ENCODE measurements at regions of chr10 and their contacts with region 1.

Region 1: GRCh38 chr10:6269953-6270867 is 67.5 kb downstream of the PFKFB3 start:
- DNase-seq: no peak
- ATAC-seq: no peak
- H3K4me3 ChIP-seq: no peak overlapping the region
- H3K27ac ChIP-seq: no peak overlapping the region
- H3K4me1 ChIP-seq: peaks cover 0 to 2% of the 10 kb centered on the region in 2 donors
- H3K27me3 ChIP-seq: no peaks in the 10 kb centered on the region

Region 2: GRCh38 chr10:6014241-6014761 is 255.9 kb before region 1 on chr10:
- intact Hi-C with region 1: no loop called
- DNase-seq: peak in 1 of 2 donors; percentile 58
- ATAC-seq: peak; percentile 67
- H3K4me3 ChIP-seq: no peak overlapping the region
- H3K27ac ChIP-seq: no peak overlapping the region
- H3K4me1 ChIP-seq: no peaks in the 10 kb centered on the region
- H3K27me3 ChIP-seq: no peaks in the 10 kb centered on the region

Region 3: GRCh38 chr10:6239213-6239991 is 30.8 kb before region 1 on chr10:
- intact Hi-C with region 1: loop called in 1 of 2 experiments (anchors 5 kb)
- DNase-seq: no peak
- ATAC-seq: peak; percentile 42
- H3K4me3 ChIP-seq: no peak overlapping the region
- H3K27ac ChIP-seq: peak overlapping the region in 1 of 2 donors; percentile 24
- H3K4me1 ChIP-seq: no peaks in the 10 kb centered on the region
- H3K27me3 ChIP-seq: no peaks in the 10 kb centered on the region

Region 4: DNA sequence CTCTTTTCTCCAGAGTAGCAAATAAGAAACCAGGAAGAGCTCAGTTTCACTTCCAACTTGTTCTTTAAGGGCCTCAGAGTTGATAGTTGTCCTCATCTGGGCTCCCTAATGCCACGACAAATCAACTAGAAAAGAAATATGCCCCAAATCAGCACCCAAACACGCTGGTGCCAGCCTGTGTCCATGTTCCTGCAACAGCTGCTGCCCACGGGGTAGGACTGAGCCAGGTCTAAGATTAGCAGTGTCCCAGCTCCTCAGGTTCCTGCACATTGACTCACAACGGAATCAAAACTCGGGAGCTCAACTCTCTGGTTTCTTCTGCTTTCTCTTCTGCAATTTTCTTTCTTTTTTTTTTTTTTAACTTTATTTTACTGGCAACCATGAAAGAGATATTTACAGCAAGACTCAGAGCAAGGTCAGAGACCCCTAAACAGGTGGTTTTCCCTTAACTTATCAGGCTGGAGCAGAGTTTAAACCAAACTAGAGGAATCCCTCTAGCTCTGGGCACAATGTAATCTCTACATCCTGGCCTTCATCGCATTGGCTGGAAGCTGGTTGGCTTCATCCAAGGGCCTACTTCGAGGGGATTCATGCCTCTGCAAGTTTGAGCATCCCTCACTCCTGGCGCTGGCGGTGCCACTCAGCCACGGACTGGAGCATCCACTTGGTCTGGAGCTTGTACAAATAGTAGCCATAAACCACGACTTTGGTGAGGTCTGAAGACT is 58.7 kb after region 1 on chr10:
- intact Hi-C with region 1: loop called in 1 of 2 experiments (anchors 5 kb)
- DNase-seq: peak; percentile 71 to 84
- ATAC-seq: peak; percentile 78
- H3K4me3 ChIP-seq: no peak overlapping the region
- H3K27ac ChIP-seq: peak overlapping the region; percentile 76 to 95
- H3K4me1 ChIP-seq: peaks cover 6 to 10% of the 10 kb centered on the region in 2 donors
- H3K27me3 ChIP-seq: no peaks in the 10 kb centered on the region

Measured in aorta (tissue), 5 donors.